CD4-positive, alpha-beta memory T cell (primary cell): ENCODE measurements at regions of chr17 and their contacts with region 1.

Region 1: DNA sequence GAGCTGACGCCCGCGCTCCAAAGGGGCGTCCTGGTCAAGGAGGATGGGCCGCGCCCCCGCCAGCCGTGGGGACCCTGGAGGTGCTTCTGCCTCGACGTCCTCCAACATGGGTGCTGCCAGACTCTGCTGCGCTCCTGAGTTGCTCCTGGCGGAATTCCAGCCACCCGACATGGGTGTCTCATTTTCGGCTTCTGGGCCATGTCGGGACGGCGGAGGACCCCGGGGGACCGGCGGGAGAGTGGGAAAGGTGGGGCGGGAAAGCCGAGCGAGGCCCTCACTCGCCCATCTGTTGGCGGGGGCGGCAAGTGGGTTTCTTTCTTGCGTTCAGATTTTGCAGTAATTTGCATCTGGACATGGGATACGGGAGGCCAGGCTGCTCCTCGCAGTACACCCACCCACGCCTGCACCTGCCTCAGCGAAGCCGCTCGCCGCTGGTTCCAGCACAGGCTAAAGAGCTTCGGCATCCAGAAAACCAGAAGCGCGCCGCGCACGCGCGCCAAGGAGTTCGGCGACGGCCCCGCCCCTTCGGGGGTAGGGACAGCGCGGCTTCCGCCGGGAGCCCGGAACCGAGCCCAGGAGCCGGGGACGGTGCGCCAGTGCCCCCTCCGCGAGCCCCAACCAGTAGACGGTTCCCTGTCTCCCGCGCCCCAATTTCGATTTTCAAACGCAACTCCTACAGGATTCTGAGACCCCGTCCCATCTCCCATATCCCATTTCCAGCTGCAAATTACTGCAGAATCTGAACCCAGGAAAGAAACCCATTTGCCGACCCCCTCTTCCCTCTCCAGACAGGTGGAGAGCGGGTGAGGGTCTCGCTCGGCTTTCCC is at the start of gene ARMC7:
- DNase-seq: peak; percentile 85 to 89 (median 88)
- H3K4me3 ChIP-seq: peak within 1 kb of the TSS; percentile 69 to 84
- H3K4me3 Mint-ChIP-seq: peak within 1 kb of the TSS; percentile 88 to 93 (median 91)
- H3K27ac ChIP-seq: peak within 1 kb of the TSS; percentile 60
- H3K27ac Mint-ChIP-seq: peak within 1 kb of the TSS; percentile 76 to 96 (median 92)
- H3K4me1 ChIP-seq: peaks cover 41% of the 10 kb centered on the region
- H3K4me1 Mint-ChIP-seq: peaks cover 22 to 42% (median 31%) of the 10 kb centered on the region in 4 donors
- H3K27me3 ChIP-seq: no peaks in the 10 kb centered on the region
- H3K27me3 Mint-ChIP-seq: no peaks in the 10 kb centered on the region
- total RNA-seq, gene ARMC7: 20.0 to 21.9 TPM

Region 2: GRCh38 chr17:74873038-74873873 is 236.4 kb before region 1 on chr17:
- CTCF ChIA-PET with region 1: no interaction called
- POLR2A ChIA-PET with region 1: no interaction called
- intact Hi-C with region 1: no loop called
- DNase-seq: peak; percentile 97 to 100 (median 99)
- H3K4me3 ChIP-seq: peak overlapping the region; percentile 79 to 84
- H3K4me3 Mint-ChIP-seq: peak overlapping the region; percentile 87 to 98 (median 94)
- H3K27ac ChIP-seq: peak overlapping the region; percentile 90
- H3K27ac Mint-ChIP-seq: peak overlapping the region; percentile 90 to 98 (median 98)
- H3K4me1 ChIP-seq: peaks cover 22% of the 10 kb centered on the region
- H3K4me1 Mint-ChIP-seq: peaks cover 10 to 27% (median 17%) of the 10 kb centered on the region in 4 donors
- H3K27me3 ChIP-seq: no peaks in the 10 kb centered on the region
- H3K27me3 Mint-ChIP-seq: no peaks in the 10 kb centered on the region

Region 3: GRCh38 chr17:75003070-75003962 is 106.3 kb before region 1 on chr17:
- CTCF ChIA-PET with region 1: no interaction called
- POLR2A ChIA-PET with region 1: no interaction called
- intact Hi-C with region 1: no loop called
- DNase-seq: no peak
- H3K4me3 ChIP-seq: no peak overlapping the region
- H3K4me3 Mint-ChIP-seq: no peak overlapping the region
- H3K27ac ChIP-seq: no peak overlapping the region
- H3K27ac Mint-ChIP-seq: no peak overlapping the region
- H3K4me1 ChIP-seq: no peaks in the 10 kb centered on the region
- H3K4me1 Mint-ChIP-seq: peaks cover 0 to 6% (median 4%) of the 10 kb centered on the region in 4 donors
- H3K27me3 ChIP-seq: no peaks in the 10 kb centered on the region
- H3K27me3 Mint-ChIP-seq: peaks cover 2% of the 10 kb centered on the region in 2 donors

Region 4: GRCh38 chr17:75034236-75034908 is 75.2 kb before region 1 on chr17:
- CTCF ChIA-PET with region 1: interaction called, 6 read pairs
- POLR2A ChIA-PET with region 1: interaction called, 14 read pairs
- intact Hi-C with region 1: no loop called
- DNase-seq: peak; percentile 73 to 83 (median 75)
- H3K4me3 ChIP-seq: peak overlapping the region; percentile 64 to 70
- H3K4me3 Mint-ChIP-seq: peak overlapping the region; percentile 79 to 91 (median 88)
- H3K27ac ChIP-seq: peak overlapping the region; percentile 55
- H3K27ac Mint-ChIP-seq: peak overlapping the region; percentile 99 to 100 (median 100)
- H3K4me1 ChIP-seq: peaks cover 57% of the 10 kb centered on the region
- H3K4me1 Mint-ChIP-seq: peaks cover 31 to 69% (median 54%) of the 10 kb centered on the region in 4 donors
- H3K27me3 ChIP-seq: no peaks in the 10 kb centered on the region
- H3K27me3 Mint-ChIP-seq: peaks cover 0 to 14% of the 10 kb centered on the region in 2 donors

Region 5: DNA sequence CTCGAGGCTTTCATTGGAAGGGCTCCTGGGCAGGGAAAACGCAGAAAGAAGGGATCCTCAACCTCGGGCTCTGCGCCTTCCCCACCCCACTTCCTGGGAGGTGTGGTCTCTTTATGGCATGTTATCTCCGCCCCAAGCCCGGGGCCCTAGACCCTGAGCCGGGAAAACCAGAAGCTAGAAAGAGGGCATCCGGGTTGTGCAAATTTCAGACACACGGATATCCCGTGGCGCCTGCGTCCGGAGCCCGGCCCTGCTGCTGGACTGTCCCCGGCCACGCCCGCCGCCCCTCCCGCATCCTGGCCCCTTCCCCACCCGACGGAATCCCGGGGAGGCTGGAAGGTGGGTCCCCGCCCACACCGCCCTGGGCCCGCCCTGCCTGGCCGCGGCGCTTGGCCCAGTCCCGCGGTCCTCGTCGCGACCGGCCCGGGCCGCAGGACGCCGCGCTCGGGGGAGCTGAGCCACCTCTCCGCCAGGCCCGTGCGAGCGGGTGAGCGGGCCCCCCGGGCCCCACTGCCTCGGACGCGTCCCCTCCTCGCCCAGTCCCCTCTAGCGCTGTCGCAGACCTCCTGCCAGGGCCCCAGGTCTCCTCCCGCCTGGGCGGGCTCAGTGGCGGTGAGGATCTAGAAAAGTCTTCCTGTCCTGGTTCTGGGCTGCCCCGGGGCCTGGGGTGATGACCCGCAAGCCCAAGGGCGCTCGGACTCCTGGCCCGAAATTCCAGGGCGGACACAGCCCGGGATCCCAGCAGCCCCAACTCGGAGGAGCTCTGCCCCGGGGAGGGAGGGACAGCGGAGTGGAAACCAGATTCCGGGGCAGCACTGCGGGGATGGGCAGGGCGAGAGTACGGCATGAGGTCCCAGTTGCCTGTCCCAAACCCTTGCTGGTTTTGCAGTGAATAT is 21.8 kb before region 1 on chr17 and contains the start of gene SLC16A5:
- CTCF ChIA-PET with region 1: interaction called, 7 read pairs
- POLR2A ChIA-PET with region 1: interaction called, 12 read pairs
- intact Hi-C with region 1: loop called (anchors 2 kb)
- DNase-seq: peak; percentile 42 to 58 (median 45)
- H3K4me3 ChIP-seq: peak within 1 kb of the TSS; percentile 65 to 68
- H3K4me3 Mint-ChIP-seq: peak within 1 kb of the TSS; percentile 82 to 90 (median 84)
- H3K27ac ChIP-seq: peak within 1 kb of the TSS; percentile 64
- H3K27ac Mint-ChIP-seq: peak within 1 kb of the TSS; percentile 35 to 97 (median 81)
- H3K4me1 ChIP-seq: peaks cover 32% of the 10 kb centered on the region
- H3K4me1 Mint-ChIP-seq: peaks cover 36 to 64% (median 49%) of the 10 kb centered on the region in 4 donors
- H3K27me3 ChIP-seq: no peaks in the 10 kb centered on the region
- H3K27me3 Mint-ChIP-seq: no peaks in the 10 kb centered on the region
- total RNA-seq, gene SLC16A5: 12.5 to 13.9 TPM

Region 6: GRCh38 chr17:75144816-75145512 is 35.3 kb after region 1 on chr17:
- CTCF ChIA-PET with region 1: interaction called, 15 read pairs
- POLR2A ChIA-PET with region 1: interaction called, 4 read pairs
- intact Hi-C with region 1: loop called (anchors 5 kb)
- DNase-seq: no peak
- H3K4me3 ChIP-seq: no peak overlapping the region
- H3K4me3 Mint-ChIP-seq: no peak overlapping the region
- H3K27ac ChIP-seq: no peak overlapping the region
- H3K27ac Mint-ChIP-seq: peak overlapping the region in 3 of 7 donors; percentile 42 to 70 (median 57)
- H3K4me1 ChIP-seq: peaks cover 16% of the 10 kb centered on the region
- H3K4me1 Mint-ChIP-seq: peaks cover 15 to 26% (median 21%) of the 10 kb centered on the region in 4 donors
- H3K27me3 ChIP-seq: no peaks in the 10 kb centered on the region
- H3K27me3 Mint-ChIP-seq: no peaks in the 10 kb centered on the region

Region 7: DNA sequence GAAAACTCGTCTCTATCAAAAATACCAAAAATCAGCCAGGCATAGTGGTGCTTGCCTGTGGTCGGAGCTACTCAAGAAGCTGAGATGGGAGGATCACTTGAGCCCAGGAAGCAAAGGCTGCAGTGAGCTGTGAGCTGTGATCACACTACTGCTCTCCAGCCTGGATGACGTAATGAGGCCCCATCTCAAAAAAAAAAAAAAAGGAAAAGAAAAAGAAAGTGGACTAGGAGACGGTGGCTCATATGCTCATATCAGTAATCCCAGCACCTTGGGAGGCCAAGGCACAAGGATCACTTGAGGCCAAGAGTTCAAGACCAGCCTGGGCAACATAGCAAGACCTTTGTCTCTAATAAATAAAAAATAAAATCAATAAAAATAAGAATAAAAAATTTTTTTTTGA is 82.0 kb after region 1 on chr17:
- CTCF ChIA-PET with region 1: interaction called, 309 read pairs
- POLR2A ChIA-PET with region 1: interaction called, 4 read pairs
- intact Hi-C with region 1: no loop called
- DNase-seq: no peak
- H3K4me3 ChIP-seq: no peak overlapping the region
- H3K4me3 Mint-ChIP-seq: no peak overlapping the region
- H3K27ac ChIP-seq: no peak overlapping the region
- H3K27ac Mint-ChIP-seq: no peak overlapping the region
- H3K4me1 ChIP-seq: no peaks in the 10 kb centered on the region
- H3K4me1 Mint-ChIP-seq: peaks cover 4 to 7% (median 4%) of the 10 kb centered on the region in 4 donors
- H3K27me3 ChIP-seq: no peaks in the 10 kb centered on the region
- H3K27me3 Mint-ChIP-seq: no peaks in the 10 kb centered on the region

Region 8: GRCh38 chr17:75250009-75250471 is 140.4 kb after region 1 on chr17:
- CTCF ChIA-PET with region 1: interaction called, 21 read pairs
- POLR2A ChIA-PET with region 1: no interaction called
- intact Hi-C with region 1: no loop called
- DNase-seq: peak in 4 of 5 donors; percentile 43 to 91 (median 50)
- H3K4me3 ChIP-seq: peak overlapping the region in 1 of 2 donors; percentile 35
- H3K4me3 Mint-ChIP-seq: peak overlapping the region; percentile 78 to 90 (median 84)
- H3K27ac ChIP-seq: peak overlapping the region; percentile 51
- H3K27ac Mint-ChIP-seq: peak overlapping the region; percentile 90 to 99 (median 95)
- H3K4me1 ChIP-seq: peaks cover 40% of the 10 kb centered on the region
- H3K4me1 Mint-ChIP-seq: peaks cover 24 to 64% (median 48%) of the 10 kb centered on the region in 4 donors
- H3K27me3 ChIP-seq: no peaks in the 10 kb centered on the region
- H3K27me3 Mint-ChIP-seq: no peaks in the 10 kb centered on the region

Region 9: DNA sequence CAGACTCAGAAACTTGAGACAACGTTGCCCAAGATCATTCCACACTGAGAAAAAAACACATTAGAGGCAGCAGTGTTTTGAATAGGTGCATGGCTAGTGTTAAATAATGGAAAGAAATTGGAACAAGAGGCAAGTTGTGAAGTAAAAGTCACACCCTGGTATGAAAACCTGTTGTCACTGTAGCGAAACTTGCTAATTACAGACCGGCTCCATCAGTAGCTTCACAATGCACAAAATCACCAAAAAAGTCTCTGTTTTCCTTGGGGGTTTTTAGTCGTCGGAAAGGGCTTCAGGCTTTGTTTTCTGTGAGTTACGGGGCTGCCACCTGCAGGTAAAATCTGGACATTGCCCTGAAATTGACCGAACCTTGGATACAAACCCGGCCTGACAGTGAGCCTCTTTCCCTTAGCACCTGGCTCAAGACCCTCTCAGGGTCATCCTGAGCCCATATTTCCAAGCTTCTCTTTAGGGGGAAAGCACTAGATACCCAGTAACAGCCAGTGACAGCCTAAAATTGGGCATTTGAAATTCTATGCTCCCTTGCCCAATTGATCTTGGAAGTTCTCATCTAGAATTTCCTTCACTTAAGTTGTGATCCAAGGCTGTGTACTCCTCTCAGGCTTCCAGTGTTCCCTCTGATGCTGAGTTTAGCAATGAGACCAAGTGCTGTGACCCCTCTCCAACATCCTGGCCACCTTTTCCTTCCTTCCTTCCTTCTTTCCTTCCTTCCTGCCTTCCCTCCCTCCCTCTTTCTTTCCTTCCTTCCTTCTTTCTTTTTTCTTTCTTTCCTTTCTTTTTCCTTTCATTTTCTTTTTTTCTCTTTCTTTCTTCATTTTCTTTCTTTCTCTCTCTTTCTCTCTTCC is 303.1 kb after region 1 on chr17:
- CTCF ChIA-PET with region 1: interaction called, 11 read pairs
- POLR2A ChIA-PET with region 1: interaction called, 3 read pairs
- intact Hi-C with region 1: loop called (anchors 1 kb)
- DNase-seq: peak; percentile 66 to 79 (median 77)
- H3K4me3 ChIP-seq: no peak overlapping the region
- H3K4me3 Mint-ChIP-seq: peak overlapping the region in 7 of 8 donors; percentile 0 to 68 (median 6)
- H3K27ac ChIP-seq: no peak overlapping the region
- H3K27ac Mint-ChIP-seq: peak overlapping the region in 5 of 7 donors; percentile 0 to 29 (median 3)
- H3K4me1 ChIP-seq: peaks cover 13% of the 10 kb centered on the region
- H3K4me1 Mint-ChIP-seq: peaks cover 7 to 16% (median 11%) of the 10 kb centered on the region in 4 donors
- H3K27me3 ChIP-seq: no peaks in the 10 kb centered on the region
- H3K27me3 Mint-ChIP-seq: peaks cover 5 to 6% of the 10 kb centered on the region in 2 donors

Region 10: DNA sequence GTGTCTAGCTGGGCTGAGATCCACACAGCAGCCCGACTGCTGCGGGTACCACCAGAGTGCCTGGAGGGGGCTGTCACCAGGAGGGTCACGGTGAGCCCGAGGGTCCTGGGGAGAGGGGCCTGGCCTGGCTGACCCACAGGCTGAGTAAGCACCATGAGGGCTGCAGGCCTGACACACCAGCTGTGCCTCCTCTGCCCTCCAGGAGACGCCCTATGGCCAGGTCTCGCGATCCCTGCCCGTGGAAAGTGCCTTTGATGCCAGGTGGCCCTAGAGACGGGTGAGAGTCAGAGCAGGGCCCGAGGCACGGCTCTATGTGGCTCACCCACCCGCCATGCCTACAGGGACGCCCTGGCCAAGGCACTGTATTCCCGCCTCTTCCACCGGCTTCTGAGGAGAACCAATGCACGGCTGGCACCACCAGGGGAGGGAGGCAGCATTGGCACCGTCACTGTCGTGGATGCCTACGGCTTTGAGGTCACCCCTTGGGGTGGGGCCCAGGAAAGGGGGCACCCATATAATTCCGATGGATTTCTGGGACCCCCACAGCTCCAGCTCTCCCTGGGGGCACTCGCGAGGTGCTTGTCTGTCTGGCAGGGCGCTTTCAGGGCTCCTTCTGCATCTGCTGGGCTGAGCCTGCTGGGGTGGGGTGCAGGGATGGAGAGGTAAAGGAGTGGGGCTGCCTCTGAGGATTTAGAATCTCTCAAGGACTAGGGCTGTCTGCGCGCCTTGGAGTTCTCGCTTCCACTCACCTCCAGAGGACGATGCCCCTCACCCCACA is 485.1 kb after region 1 on chr17:
- CTCF ChIA-PET with region 1: no interaction called
- POLR2A ChIA-PET with region 1: no interaction called
- intact Hi-C with region 1: no loop called
- DNase-seq: no peak
- H3K4me3 ChIP-seq: no peak overlapping the region
- H3K4me3 Mint-ChIP-seq: no peak overlapping the region
- H3K27ac ChIP-seq: no peak overlapping the region
- H3K27ac Mint-ChIP-seq: no peak overlapping the region
- H3K4me1 ChIP-seq: peaks cover 2% of the 10 kb centered on the region
- H3K4me1 Mint-ChIP-seq: peaks cover 0 to 6% (median 3%) of the 10 kb centered on the region in 4 donors
- H3K27me3 ChIP-seq: no peaks in the 10 kb centered on the region
- H3K27me3 Mint-ChIP-seq: no peaks in the 10 kb centered on the region